ENCODE measurements at regions of chr9 and their contacts with region 1.

Region 1: GRCh38 chr9:35814841-35815543 is at the start of gene HINT2:
- DNase-seq: peak; percentile 98 to 99
- H3K4me3 ChIP-seq: peak within 1 kb of the TSS; percentile 79
- H3K4me3 Mint-ChIP-seq: peak within 1 kb of the TSS; percentile 93
- H3K27ac Mint-ChIP-seq: peak within 1 kb of the TSS; percentile 93
- H3K4me1 ChIP-seq: peaks cover 20% of the 10 kb centered on the region
- H3K4me1 Mint-ChIP-seq: peaks cover 14% of the 10 kb centered on the region
- H3K27me3 ChIP-seq: no peaks in the 10 kb centered on the region
- H3K27me3 Mint-ChIP-seq: no peaks in the 10 kb centered on the region
- CTCF ChIP-seq: no peak
- total RNA-seq, gene HINT2: 88.0 and 110 TPM in 2 replicates

Region 2: DNA sequence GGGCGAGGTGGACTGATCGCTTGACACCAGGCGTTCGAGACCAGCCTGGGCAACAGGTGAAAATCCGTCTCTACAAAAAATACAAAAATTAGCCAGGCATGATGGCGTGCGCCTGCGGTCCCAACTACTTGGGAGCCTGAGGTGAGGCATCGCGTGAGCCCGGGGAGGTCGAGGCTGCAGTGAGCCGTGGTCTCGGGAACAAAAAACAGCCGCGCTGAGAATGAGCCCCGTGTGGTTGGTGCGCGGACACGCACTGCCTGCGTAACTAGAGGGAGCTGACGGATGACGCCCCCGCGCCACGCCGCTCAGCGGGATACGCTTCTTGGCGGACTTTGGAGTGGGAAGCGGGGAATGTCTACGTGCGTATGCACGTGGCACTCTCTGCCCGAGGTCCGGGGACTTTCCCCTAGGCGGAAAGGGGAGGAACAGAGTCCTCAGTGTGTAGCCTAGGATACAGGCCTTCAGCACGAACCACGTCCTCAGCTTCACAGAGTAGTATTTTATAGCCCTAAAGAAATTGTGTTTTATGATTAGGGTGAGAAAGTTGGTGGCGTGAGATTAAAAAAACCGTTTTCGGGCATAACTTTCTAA is 157.4 kb before region 1 on chr9 and contains the start of gene RMRP:
- CTCF ChIA-PET with region 1: interaction called, 5 read pairs
- POLR2A ChIA-PET with region 1: no interaction called
- intact Hi-C with region 1: loop called (anchors 2 kb)
- DNase-seq: peak; percentile 98 to 100
- H3K4me3 ChIP-seq: peak within 1 kb of the TSS; percentile 95
- H3K4me3 Mint-ChIP-seq: peak within 1 kb of the TSS; percentile 76
- H3K27ac Mint-ChIP-seq: peak within 1 kb of the TSS; percentile 82
- H3K4me1 ChIP-seq: 0 out of 2 replicates have a peak, but pooled peaks cover 5% of the 10 kb centered on the region
- H3K4me1 Mint-ChIP-seq: peaks cover 12% of the 10 kb centered on the region
- H3K27me3 ChIP-seq: no peaks in the 10 kb centered on the region
- H3K27me3 Mint-ChIP-seq: peaks cover 3% of the 10 kb centered on the region
- CTCF ChIP-seq: peak; percentile 15 to 21
- total RNA-seq, gene RMRP: 10,161 and 10,726 TPM in 2 replicates

Region 3: GRCh38 chr9:35756275-35757225 is 58.4 kb before region 1 on chr9:
- CTCF ChIA-PET with region 1: interaction called, 10 read pairs
- POLR2A ChIA-PET with region 1: no interaction called
- intact Hi-C with region 1: no loop called
- DNase-seq: peak; percentile 72 to 77
- H3K4me3 ChIP-seq: peak overlapping the region; percentile 59
- H3K4me3 Mint-ChIP-seq: peak overlapping the region; percentile 80
- H3K27ac Mint-ChIP-seq: peak overlapping the region; percentile 81
- H3K4me1 ChIP-seq: peaks cover 5% of the 10 kb centered on the region; the same call in 1 of the 2 replicates
- H3K4me1 Mint-ChIP-seq: peaks cover 14% of the 10 kb centered on the region
- H3K27me3 ChIP-seq: no peaks in the 10 kb centered on the region
- H3K27me3 Mint-ChIP-seq: no peaks in the 10 kb centered on the region
- CTCF ChIP-seq: peak; percentile 56 to 76

Region 4: DNA sequence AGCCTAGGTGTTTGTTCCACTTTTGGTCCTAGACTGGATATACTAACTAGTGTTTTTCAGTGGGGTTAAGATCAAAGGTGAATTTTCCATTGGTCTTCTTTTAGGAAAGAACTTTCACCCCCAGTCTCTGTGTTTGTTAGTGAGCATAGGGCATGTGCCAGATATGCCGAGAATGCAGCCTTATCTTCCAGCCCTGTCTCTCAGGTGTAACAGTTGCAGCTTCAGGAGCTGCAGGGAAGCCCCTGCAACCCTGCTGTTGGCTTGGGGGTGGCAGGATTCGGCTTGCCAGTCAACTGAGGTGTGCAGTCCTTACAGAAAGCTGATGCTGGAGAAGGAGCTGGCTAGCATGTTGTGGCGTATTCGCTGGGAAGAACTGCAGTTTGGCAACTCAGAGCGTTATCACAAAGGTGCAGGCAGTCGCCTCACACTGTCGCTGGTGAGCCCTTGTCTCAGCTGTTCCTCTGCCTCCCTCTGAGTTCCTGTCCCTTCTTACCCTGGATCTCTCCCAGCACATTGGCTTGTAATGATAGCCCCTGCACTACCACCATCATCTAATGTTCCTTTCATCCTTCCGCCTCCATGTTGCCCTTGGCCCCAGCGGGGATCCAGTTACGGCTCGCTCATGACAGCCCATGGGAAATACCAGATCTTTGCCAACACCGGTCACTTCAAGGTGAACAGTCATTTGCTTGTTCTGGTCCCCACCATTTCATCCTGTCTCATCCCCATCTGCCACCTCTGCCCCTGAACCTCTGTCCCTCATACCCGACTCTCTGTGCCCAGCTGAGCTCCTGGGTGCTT is 13.5 kb before region 1 on chr9:
- CTCF ChIA-PET with region 1: interaction called, 16 read pairs
- POLR2A ChIA-PET with region 1: interaction called, 4 read pairs
- intact Hi-C with region 1: loop called (anchors 1 kb)
- DNase-seq: peak; percentile 55 to 62
- H3K4me3 ChIP-seq: peak overlapping the region; percentile 6; the same call in 1 of the 2 replicates
- H3K4me3 Mint-ChIP-seq: peak overlapping the region; percentile 70
- H3K27ac Mint-ChIP-seq: peak overlapping the region; percentile 85
- H3K4me1 ChIP-seq: peaks cover 46% of the 10 kb centered on the region
- H3K4me1 Mint-ChIP-seq: peaks cover 29% of the 10 kb centered on the region
- H3K27me3 ChIP-seq: no peaks in the 10 kb centered on the region
- H3K27me3 Mint-ChIP-seq: no peaks in the 10 kb centered on the region
- CTCF ChIP-seq: no peak

Region 5: DNA sequence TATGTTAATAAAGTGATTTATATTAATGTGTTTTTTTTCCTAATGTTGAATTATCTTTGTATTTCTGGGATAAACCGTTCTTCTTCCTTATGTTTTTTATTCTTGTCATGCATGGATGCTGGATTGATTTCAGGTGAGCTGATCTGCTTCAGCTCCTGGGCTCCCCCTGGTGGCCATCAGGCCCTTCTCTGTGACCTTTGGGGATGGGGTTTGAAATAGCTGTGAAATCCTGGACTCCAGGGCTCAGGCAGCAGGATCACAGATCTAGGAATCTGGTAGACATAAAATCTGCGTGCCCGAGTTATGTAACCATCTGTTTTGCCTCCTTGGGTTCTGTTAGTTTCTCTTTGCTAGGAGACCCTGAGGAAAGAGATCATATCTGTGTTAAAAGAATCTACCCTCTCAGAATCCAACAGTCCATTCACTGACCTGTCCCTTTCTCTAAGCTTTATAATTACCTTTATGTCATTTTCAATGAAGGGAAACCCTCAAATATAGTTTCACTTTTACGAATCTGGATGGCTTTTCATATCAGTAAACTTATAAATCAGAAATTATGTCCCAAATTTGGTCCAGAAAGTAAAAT is 67.4 kb after region 1 on chr9:
- CTCF ChIA-PET with region 1: interaction called, 14 read pairs
- POLR2A ChIA-PET with region 1: no interaction called
- intact Hi-C with region 1: no loop called
- DNase-seq: peak; percentile 76 to 86
- H3K4me3 ChIP-seq: no peak overlapping the region
- H3K4me3 Mint-ChIP-seq: no peak overlapping the region
- H3K27ac Mint-ChIP-seq: no peak overlapping the region
- H3K4me1 ChIP-seq: no peaks in the 10 kb centered on the region
- H3K4me1 Mint-ChIP-seq: no peaks in the 10 kb centered on the region
- H3K27me3 ChIP-seq: no peaks in the 10 kb centered on the region
- H3K27me3 Mint-ChIP-seq: peaks cover 4% of the 10 kb centered on the region
- CTCF ChIP-seq: peak; percentile 93 to 97

Region 6: DNA sequence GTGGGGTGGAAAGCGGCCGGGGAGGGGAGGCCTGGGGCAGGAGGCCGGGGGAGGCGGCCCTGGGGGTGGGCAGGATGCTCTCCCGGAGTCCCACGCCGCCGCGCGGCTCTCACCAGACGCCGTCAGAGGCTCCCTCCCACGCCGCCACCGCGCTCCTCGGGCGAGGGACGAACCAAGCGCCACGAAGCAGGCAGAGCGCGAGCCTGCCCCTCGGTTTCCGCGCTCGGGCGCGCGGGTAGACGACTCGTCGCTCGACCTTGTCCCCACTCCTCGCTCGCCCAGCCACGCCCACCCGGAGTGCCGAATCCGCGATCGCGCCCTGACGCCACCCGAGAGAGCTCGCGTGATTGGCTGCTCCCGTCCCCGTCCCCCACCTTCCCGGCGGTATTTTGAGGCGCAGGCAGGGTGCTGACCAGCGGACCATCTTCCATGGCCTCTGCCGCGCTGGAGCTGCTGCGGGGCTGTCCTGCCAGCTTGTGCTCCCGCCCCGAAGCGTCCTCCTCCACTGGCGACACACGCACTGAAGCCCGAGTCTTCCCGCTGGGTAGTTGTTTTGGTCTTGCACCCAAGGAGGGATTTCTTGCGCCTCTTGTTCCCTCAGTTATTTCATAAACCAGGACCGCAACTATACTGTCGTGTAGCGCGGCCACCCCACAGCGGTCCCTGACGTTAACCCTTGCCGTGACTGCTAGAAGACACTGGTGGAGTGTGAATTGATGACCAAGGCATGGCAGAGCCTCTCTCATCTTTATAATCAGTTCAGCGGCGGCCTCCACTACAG is 443.4 kb after region 1 on chr9 and contains the start of gene GNE:
- CTCF ChIA-PET with region 1: no interaction called
- POLR2A ChIA-PET with region 1: no interaction called
- intact Hi-C with region 1: no loop called
- DNase-seq: peak; percentile 96
- H3K4me3 ChIP-seq: peak within 1 kb of the TSS; percentile 78
- H3K4me3 Mint-ChIP-seq: peak within 1 kb of the TSS; percentile 91
- H3K27ac Mint-ChIP-seq: peak within 1 kb of the TSS; percentile 90
- H3K4me1 ChIP-seq: no peaks in the 10 kb centered on the region
- H3K4me1 Mint-ChIP-seq: no peaks in the 10 kb centered on the region
- H3K27me3 ChIP-seq: no peaks in the 10 kb centered on the region
- H3K27me3 Mint-ChIP-seq: no peaks in the 10 kb centered on the region
- CTCF ChIP-seq: no peak
- total RNA-seq, gene GNE: 15.2 and 18.7 TPM in 2 replicates

Measured in Caco-2 (cell line).